BJ (cell line): ENCODE measurements at regions of chr12 and their contacts with region 1.

Region 1: GRCh38 chr12:113334786-113335540 is at the start of gene SLC8B1:
- DNase-seq: no peak
- H3K4me3 ChIP-seq: peak within 1 kb of the TSS; percentile 47
- H3K27me3 ChIP-seq: no peaks in the 10 kb centered on the region
- CTCF ChIP-seq: no peak
- polyA plus RNA-seq, gene SLC8B1: 14.4 and 27.3 TPM in 2 replicates

Region 2: GRCh38 chr12:113208041-113208934 is 126.7 kb before region 1 on chr12:
- CTCF ChIA-PET with region 1: no interaction called
- POLR2A ChIA-PET with region 1: no interaction called
- DNase-seq: no peak
- H3K4me3 ChIP-seq: no peak overlapping the region
- H3K27me3 ChIP-seq: no peaks in the 10 kb centered on the region
- CTCF ChIP-seq: no peak

Region 3: GRCh38 chr12:113322343-113322742 is 12.6 kb before region 1 on chr12:
- CTCF ChIA-PET with region 1: no interaction called
- POLR2A ChIA-PET with region 1: no interaction called
- DNase-seq: peak; percentile 32
- H3K4me3 ChIP-seq: no peak overlapping the region
- H3K27me3 ChIP-seq: no peaks in the 10 kb centered on the region
- CTCF ChIP-seq: no peak

Region 4: GRCh38 chr12:113347892-113348291 is 12.9 kb after region 1 on chr12:
- CTCF ChIA-PET with region 1: no interaction called
- POLR2A ChIA-PET with region 1: no interaction called
- DNase-seq: no peak
- H3K4me3 ChIP-seq: no peak overlapping the region
- H3K27me3 ChIP-seq: 0 out of 2 replicates have a peak, but pooled peaks cover 2% of the 10 kb centered on the region
- CTCF ChIP-seq: no peak

Region 5: DNA sequence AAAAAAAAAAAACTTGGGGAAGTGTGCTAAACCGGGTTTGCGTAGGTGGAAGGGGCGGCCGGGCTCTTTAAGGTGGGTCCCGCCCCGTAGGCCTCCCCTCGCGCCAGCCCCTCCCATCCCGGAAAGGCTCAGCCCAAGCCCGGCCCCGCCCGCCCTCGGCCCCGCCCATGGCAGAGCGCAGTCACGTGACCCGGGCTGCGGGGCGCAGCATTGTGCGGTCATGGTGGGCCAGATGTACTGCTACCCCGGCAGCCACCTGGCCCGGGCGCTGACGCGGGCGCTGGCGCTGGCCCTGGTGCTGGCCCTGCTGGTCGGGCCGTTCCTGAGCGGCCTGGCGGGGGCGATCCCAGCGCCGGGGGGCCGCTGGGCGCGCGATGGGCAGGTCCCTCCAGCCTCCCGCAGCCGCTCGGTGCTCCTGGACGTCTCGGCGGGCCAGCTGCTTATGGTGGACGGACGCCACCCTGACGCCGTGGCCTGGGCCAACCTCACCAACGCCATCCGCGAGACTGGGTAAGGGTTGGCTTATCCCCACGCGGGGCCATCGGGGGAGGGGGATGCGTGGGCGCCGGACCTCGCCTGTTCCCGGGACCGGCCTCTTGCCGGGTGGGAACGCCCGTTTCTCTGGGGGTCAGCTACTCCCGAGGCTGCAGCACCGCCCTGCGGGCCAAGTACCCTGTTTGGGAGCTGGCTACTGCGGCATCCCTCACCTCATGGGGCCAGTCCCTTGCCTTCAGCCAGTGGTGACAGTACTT is 23.6 kb after region 1 on chr12 and contains the start of gene PLBD2:
- CTCF ChIA-PET with region 1: interaction called, 3 read pairs
- POLR2A ChIA-PET with region 1: interaction called, 10 read pairs
- DNase-seq: peak; percentile 52
- H3K4me3 ChIP-seq: peak within 1 kb of the TSS; percentile 93
- H3K27me3 ChIP-seq: no peaks in the 10 kb centered on the region
- CTCF ChIP-seq: no peak
- polyA plus RNA-seq, gene PLBD2: 20.1 and 30.9 TPM in 2 replicates